Gastrocnemius medialis (tissue), 4 donors: ENCODE measurements at regions of chr13 and their contacts with region 1.

Region 1: GRCh38 chr13:35499196-35500060 is 22.9 kb upstream of the MAB21L1 start:
- DNase-seq: no peak
- ATAC-seq: peak in 1 of 2 donors; percentile 46
- H3K4me3 ChIP-seq: no peak overlapping the region
- H3K27ac ChIP-seq: no peak overlapping the region
- H3K4me1 ChIP-seq: peaks cover 0 to 17% of the 10 kb centered on the region in 2 donors
- H3K27me3 ChIP-seq: no peaks in the 10 kb centered on the region
- CTCF ChIP-seq: no peak
- POLR2A ChIP-seq: no peak

Region 2: DNA sequence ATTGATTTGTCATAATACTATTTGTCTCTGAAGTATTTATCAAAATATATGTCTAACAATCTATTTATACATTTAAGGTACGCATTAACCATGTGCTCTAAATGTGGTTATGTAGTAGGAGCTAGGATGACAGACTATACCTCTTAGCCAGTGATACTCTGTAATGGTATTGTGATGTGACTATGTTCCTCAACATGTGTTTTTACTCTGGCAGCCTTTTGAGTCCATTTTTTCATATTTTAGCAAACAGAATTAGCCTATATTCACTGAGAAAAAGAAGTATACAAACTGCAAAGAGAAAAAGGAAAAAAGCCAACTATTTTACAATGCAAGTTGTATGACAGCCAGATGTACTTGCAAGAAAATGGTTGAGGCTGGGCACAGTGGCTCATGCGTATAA is 49.6 kb before region 1 on chr13:
- in situ Hi-C with region 1: no loop called
- intact Hi-C with region 1: loop called (anchors 10 kb)
- DNase-seq: no peak
- ATAC-seq: no peak
- H3K4me3 ChIP-seq: no peak overlapping the region
- H3K27ac ChIP-seq: no peak overlapping the region
- H3K4me1 ChIP-seq: no peaks in the 10 kb centered on the region
- H3K27me3 ChIP-seq: no peaks in the 10 kb centered on the region
- CTCF ChIP-seq: no peak
- POLR2A ChIP-seq: no peak